ENCODE measurements at regions of chr18 and their contacts with region 1.

Region 1: GRCh38 chr18:49858309-49859020 is 45.1 kb upstream of the ACAA2 start:
- DNase-seq: peak; percentile 55
- H3K4me3 ChIP-seq: no peak overlapping the region
- H3K27ac ChIP-seq: no peak overlapping the region
- H3K4me1 ChIP-seq: peaks cover 3% of the 10 kb centered on the region
- H3K27me3 ChIP-seq: peaks cover 9% of the 10 kb centered on the region
- CTCF ChIP-seq: peak; percentile 90

Region 2: DNA sequence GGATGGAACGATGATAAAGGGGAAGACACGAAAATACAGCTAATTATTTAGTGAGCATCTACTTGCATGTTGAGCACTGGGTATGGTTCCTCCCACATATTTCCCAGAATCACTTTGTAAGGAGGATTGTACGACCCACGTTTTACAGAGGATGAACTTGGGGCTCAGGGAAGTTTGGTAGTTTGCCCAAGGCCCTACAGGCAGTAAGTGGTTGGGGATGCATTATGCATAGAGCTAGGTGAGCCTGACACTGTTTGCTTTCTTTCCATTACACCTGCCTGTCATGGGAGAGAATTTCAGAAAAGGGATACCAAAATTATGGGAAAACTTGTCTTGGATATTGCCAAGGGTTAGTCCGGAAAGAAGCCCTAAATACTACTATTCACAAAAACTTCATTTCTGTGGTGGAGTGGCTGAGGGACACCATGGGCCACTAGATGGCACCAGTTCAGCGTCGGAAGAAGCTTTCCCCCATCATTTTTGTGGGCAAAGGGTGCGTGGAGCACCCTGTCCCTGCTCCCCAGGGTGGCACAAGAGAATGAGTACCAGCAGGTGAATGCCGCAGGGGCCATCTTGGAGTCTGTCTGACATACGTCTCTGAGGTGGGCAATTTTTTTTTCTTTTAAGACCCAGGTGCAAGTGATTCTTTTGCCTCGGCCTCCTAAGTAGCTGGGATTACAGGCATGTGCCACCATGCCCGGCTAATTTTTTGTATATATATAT is 347.9 kb before region 1 on chr18:
- intact Hi-C with region 1: loop called (anchors 5 kb)
- DNase-seq: no peak
- H3K4me3 ChIP-seq: no peak overlapping the region
- H3K27ac ChIP-seq: no peak overlapping the region
- H3K4me1 ChIP-seq: no peaks in the 10 kb centered on the region
- H3K27me3 ChIP-seq: peaks cover 33% of the 10 kb centered on the region
- CTCF ChIP-seq: peak; percentile 87

Region 3: GRCh38 chr18:49561289-49562193 is 296.9 kb before region 1 on chr18 and contains the start of gene LIPG:
- intact Hi-C with region 1: loop called (anchors 5 kb)
- DNase-seq: no peak
- H3K4me3 ChIP-seq: peak within 1 kb of the TSS; percentile 57
- H3K27ac ChIP-seq: no peak within 1 kb of the TSS
- H3K4me1 ChIP-seq: peaks cover 33% of the 10 kb centered on the region
- H3K27me3 ChIP-seq: peaks cover 75% of the 10 kb centered on the region
- CTCF ChIP-seq: no peak
- total RNA-seq, gene LIPG: not detected

Measured in left ventricle myocardium inferior (tissue), 1 donor.